ENCODE measurements at regions of chr1 and their contacts with region 1.

Region 1: GRCh38 chr1:19704247-19705113 is 39.8 kb downstream of the HTR6 start:
- DNase-seq: peak; percentile 53
- ATAC-seq: peak; percentile 98
- H3K4me3 ChIP-seq: no peak overlapping the region
- H3K27ac ChIP-seq: no peak overlapping the region
- H3K4me1 ChIP-seq: peaks cover 9% of the 10 kb centered on the region
- H3K27me3 ChIP-seq: no peaks in the 10 kb centered on the region
- CTCF ChIP-seq: peak; percentile 89
- EP300 ChIP-seq: no peak
- POLR2A ChIP-seq: no peak
- RAD21 ChIP-seq: peak; percentile 62

Region 2: DNA sequence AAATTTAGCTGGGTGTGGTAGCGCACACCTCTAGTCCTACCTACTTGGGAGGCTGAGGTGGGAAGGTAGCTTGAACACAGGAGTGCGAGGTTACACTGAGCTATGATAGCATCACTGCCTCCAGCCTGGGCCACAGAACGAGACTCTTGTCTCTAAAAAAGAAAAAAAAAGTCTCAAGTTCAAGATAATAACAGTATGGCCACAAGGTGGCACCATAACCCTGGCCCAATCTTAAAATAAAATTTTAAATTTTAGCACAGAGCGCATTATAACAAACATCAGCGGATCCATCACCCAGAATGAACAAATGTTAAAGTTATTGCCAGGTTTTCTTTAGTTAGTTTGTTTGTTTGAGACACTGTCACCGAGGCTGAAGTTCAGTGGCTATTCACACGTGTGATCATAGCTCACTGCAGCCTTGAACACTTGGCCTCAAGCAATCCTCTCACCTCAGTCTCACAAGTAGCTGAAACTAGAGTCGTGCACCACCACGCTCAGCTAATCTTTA is 42.7 kb before region 1 on chr1:
- CTCF ChIA-PET with region 1: interaction called, 9 read pairs
- POLR2A ChIA-PET with region 1: no interaction called
- in situ Hi-C with region 1: loop called (anchors 5 kb)
- intact Hi-C with region 1: loop called (anchors 1 kb)
- DNase-seq: no peak
- ATAC-seq: no peak
- H3K4me3 ChIP-seq: no peak overlapping the region
- H3K27ac ChIP-seq: no peak overlapping the region
- H3K4me1 ChIP-seq: peaks cover 21% of the 10 kb centered on the region
- H3K27me3 ChIP-seq: peaks cover 8 to 32% of the 10 kb centered on the region in 2 experiments; a peak in 4 of 5 replicates
- CTCF ChIP-seq: peak; percentile 61
- EP300 ChIP-seq: no peak
- POLR2A ChIP-seq: no peak
- RAD21 ChIP-seq: peak; percentile 28; the same call in 1 of the 2 replicates

Region 3: DNA sequence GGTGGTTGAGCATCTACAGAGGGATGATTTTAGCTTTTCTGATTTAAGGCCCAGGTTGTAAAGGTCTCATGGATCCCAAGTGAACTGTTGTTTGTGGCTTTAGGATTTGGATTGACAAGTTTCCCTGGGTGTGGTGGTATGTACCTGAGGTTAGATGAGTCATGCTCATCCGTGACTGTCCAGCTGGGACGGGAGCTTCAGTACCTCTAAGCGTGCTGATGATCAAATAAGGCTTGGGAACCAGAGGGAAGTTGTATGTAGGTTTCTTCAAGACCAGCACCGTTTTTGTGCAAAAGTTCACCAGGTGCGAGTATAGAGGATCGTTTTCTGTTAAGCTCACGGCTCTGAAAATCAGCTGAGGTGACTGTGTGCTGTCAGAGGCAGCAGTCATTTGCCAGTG is 199.1 kb after region 1 on chr1:
- CTCF ChIA-PET with region 1: no interaction called
- POLR2A ChIA-PET with region 1: no interaction called
- in situ Hi-C with region 1: no loop called
- intact Hi-C with region 1: no loop called
- DNase-seq: no peak
- ATAC-seq: no peak
- H3K4me3 ChIP-seq: no peak overlapping the region
- H3K27ac ChIP-seq: no peak overlapping the region
- H3K4me1 ChIP-seq: no peaks in the 10 kb centered on the region
- H3K27me3 ChIP-seq: no peaks in the 10 kb centered on the region
- CTCF ChIP-seq: no peak
- EP300 ChIP-seq: no peak
- POLR2A ChIP-seq: no peak
- RAD21 ChIP-seq: no peak

Region 4: GRCh38 chr1:20318971-20319370 is 614.5 kb after region 1 on chr1:
- CTCF ChIA-PET with region 1: no interaction called
- POLR2A ChIA-PET with region 1: no interaction called
- in situ Hi-C with region 1: no loop called
- intact Hi-C with region 1: loop called (anchors 5 kb)
- DNase-seq: no peak
- ATAC-seq: no peak
- H3K4me3 ChIP-seq: no peak overlapping the region
- H3K27ac ChIP-seq: no peak overlapping the region
- H3K4me1 ChIP-seq: no peaks in the 10 kb centered on the region
- H3K27me3 ChIP-seq: peaks cover 11 to 87% of the 10 kb centered on the region in 2 experiments
- CTCF ChIP-seq: no peak
- EP300 ChIP-seq: no peak
- POLR2A ChIP-seq: no peak
- RAD21 ChIP-seq: no peak